ENCODE measurements at regions of chr2 and their contacts with region 1.

Region 1: GRCh38 chr2:230068016-230068650 is 591 bp downstream of the SLC16A14 start:
- DNase-seq: peak; percentile 60
- H3K4me3 ChIP-seq: peak overlapping the region; percentile 86
- H3K27ac ChIP-seq: peak overlapping the region; percentile 79
- H3K4me1 ChIP-seq: peaks cover 26% of the 10 kb centered on the region
- H3K27me3 ChIP-seq: no peaks in the 10 kb centered on the region
- CTCF ChIP-seq: peak; percentile 46

Region 2: DNA sequence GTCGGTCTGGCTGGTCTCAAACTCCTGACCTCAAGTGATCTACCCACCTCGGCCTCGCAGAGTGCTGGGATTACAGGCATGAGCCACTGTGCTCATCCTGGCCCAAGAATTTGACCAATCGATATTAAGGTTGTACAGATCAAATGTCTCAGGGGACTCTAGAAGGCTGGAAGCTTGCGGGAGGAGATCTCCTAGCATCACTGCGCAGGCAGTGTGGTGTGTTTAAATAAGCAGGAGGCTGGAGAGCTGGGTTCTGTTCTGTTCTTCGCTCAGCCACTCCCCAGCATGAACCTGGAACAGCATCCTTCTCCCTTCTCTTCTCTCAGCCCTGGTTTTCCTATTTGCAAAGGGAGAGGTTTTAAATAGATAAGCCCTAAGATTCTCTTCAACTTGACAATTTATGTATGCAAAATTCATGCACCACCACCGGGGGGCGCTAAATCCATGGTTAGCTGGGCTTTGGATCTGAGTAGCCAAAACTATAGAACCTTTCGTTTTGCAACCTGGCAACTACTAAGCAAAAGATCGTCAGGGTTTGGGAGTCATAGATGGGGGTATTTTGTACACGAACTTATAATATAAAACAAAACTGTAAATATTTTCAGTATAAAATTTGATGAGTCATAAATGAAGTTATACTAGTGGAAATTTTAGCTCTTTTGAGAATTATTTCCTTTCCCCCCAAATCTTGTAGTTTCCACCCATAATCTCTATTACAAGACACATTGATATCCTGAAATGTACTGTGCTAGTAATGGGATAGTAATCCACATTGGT is 60.0 kb before region 1 on chr2:
- intact Hi-C with region 1: loop called (anchors 10 kb)
- DNase-seq: peak; percentile 69
- H3K4me3 ChIP-seq: peak overlapping the region; percentile 30
- H3K27ac ChIP-seq: no peak overlapping the region
- H3K4me1 ChIP-seq: peaks cover 6% of the 10 kb centered on the region
- H3K27me3 ChIP-seq: no peaks in the 10 kb centered on the region
- CTCF ChIP-seq: peak; percentile 87

Region 3: GRCh38 chr2:230160112-230160660 is 92.1 kb after region 1 on chr2:
- intact Hi-C with region 1: loop called (anchors 10 kb)
- DNase-seq: no peak
- H3K4me3 ChIP-seq: no peak overlapping the region
- H3K27ac ChIP-seq: no peak overlapping the region
- H3K4me1 ChIP-seq: peaks cover 3% of the 10 kb centered on the region
- H3K27me3 ChIP-seq: no peaks in the 10 kb centered on the region
- CTCF ChIP-seq: peak; percentile 85

Measured in left ventricle myocardium inferior (tissue), 1 donor.